Activated CD8-positive, alpha-beta T cell treated with anti-CD3 and anti-CD28 coated beads, Interleukin-2, amount 10 ng/mL, durations not matched to agents 7 days and 5 days (primary cell): ENCODE measurements at regions of chr17 and their contacts with region 1.

Region 1: GRCh38 chr17:74659898-74660297 is 36.4 kb upstream of the CD300E start:
- DNase-seq: no peak
- ATAC-seq: no peak
- H3K4me3 Mint-ChIP-seq: no peak overlapping the region
- H3K27ac Mint-ChIP-seq: no peak overlapping the region
- H3K4me1 Mint-ChIP-seq: peaks cover 5% of the 10 kb centered on the region
- H3K27me3 Mint-ChIP-seq: peaks cover 56% of the 10 kb centered on the region

Region 2: GRCh38 chr17:74671031-74671771 is 11.3 kb after region 1 on chr17:
- CTCF ChIA-PET with region 1: interaction called, 40 read pairs
- POLR2A ChIA-PET with region 1: interaction called, 3 read pairs
- DNase-seq: peak; percentile 86
- ATAC-seq: peak; percentile 99
- H3K4me3 Mint-ChIP-seq: no peak overlapping the region
- H3K27ac Mint-ChIP-seq: no peak overlapping the region
- H3K4me1 Mint-ChIP-seq: no peaks in the 10 kb centered on the region
- H3K27me3 Mint-ChIP-seq: peaks cover 56% of the 10 kb centered on the region

Region 3: DNA sequence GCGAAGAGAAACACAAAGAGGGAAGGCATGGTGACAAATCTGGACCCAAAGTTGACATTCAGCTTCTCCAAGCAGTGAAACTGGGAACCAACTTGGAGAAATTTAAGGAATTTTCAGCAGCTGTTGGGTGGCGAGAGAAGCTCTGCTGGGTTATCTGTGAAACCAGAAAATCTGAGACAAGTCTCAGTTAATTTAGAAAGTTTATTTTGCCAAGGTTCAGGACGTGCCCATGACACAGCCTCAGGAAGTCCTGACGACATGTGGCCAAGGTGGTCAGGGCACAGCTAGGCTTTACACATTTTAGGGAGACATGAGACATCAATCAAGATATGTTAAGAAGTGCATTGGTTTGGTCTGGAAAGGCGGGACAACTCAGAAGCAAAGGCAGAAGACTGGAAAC is 64.0 kb after region 1 on chr17:
- CTCF ChIA-PET with region 1: interaction called, 12 read pairs
- POLR2A ChIA-PET with region 1: no interaction called
- DNase-seq: no peak
- ATAC-seq: no peak
- H3K4me3 Mint-ChIP-seq: no peak overlapping the region
- H3K27ac Mint-ChIP-seq: no peak overlapping the region
- H3K4me1 Mint-ChIP-seq: peaks cover 9% of the 10 kb centered on the region
- H3K27me3 Mint-ChIP-seq: peaks cover 32% of the 10 kb centered on the region

Region 4: DNA sequence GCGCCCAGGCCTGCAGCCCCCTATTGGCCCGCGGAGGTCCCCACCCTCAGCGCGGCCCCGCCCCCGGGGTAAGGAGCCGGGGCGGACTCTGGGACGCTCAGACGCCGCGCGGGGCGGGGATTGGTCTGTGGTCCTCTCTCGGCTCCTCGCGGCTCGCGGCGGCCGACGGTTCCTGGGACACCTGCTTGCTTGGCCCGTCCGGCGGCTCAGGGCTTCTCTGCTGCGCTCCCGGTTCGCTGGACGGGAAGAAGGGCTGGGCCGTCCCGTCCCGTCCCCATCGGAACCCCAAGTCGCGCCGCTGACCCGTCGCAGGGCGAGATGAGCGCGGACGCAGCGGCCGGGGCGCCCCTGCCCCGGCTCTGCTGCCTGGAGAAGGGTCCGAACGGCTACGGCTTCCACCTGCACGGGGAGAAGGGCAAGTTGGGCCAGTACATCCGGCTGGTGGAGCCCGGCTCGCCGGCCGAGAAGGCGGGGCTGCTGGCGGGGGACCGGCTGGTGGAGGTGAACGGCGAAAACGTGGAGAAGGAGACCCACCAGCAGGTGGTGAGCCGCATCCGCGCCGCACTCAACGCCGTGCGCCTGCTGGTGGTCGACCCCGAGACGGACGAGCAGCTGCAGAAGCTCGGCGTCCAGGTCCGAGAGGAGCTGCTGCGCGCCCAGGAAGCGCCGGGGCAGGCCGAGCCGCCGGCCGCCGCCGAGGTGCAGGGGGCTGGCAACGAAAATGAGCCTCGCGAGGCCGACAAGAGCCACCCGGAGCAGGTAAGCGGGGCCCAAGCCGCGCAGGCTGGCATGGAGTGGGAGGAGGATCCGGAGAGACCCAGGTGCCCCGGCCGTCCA is 88.8 kb after region 1 on chr17 and contains the start of gene NHERF1:
- CTCF ChIA-PET with region 1: interaction called, 41 read pairs
- POLR2A ChIA-PET with region 1: no interaction called
- DNase-seq: peak; percentile 95
- ATAC-seq: peak; percentile 90
- H3K4me3 Mint-ChIP-seq: peak within 1 kb of the TSS; percentile 99
- H3K27ac Mint-ChIP-seq: peak within 1 kb of the TSS; percentile 90
- H3K4me1 Mint-ChIP-seq: peaks cover 55% of the 10 kb centered on the region
- H3K27me3 Mint-ChIP-seq: no peaks in the 10 kb centered on the region
- total RNA-seq, gene NHERF1: 286 to 296 TPM

Region 5: DNA sequence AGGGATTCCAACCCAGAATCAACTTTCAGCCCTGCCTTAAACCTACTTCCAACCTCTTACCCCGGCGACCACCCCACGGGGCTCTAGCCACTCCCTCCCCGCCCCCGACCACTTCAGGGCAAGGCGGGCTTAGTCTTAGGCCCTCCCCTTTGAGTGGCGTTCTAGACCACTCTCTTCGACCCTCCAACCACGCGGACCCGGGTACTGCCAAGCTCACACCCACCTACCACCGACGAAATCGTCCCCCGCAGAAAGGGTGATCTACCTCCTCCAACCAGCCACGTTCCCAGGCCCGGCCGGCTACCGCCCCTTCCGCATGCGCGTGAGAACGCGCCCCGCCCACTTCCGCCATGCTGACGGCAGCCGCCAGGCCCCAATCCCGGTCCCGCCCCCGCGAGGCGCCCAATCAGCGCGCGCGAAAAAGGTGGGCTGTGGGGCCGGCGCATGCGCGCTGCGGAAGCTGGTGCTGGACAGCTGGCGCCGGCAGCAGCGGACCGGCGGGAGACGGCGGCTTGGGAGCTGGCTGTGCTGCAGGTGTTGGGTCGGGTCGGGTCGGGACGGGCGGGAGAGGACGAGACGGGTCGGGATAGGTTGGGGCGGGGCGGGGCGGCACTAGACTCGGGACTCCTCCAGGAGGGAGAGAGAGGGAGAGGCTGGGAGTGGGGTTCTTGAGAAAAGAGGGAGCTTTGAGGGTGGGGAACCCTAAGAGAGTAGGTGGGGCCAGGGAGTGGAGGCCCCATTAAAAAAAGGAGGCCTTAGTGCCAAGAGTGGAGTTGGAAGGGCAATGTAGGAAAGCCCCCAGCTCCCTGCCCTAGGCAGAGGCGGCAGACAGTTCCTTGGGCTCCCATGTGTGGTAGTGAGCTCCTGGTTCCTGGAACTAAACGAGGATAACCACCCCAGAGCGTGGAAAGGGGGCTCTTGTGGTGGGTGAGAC is 116.4 kb after region 1 on chr17 and contains the start of gene NAT9:
- CTCF ChIA-PET with region 1: interaction called, 34 read pairs
- POLR2A ChIA-PET with region 1: interaction called, 3 read pairs
- DNase-seq: peak; percentile 99
- ATAC-seq: peak; percentile 83
- H3K4me3 Mint-ChIP-seq: peak within 1 kb of the TSS; percentile 97
- H3K27ac Mint-ChIP-seq: peak within 1 kb of the TSS; percentile 89
- H3K4me1 Mint-ChIP-seq: peaks cover 70% of the 10 kb centered on the region
- H3K27me3 Mint-ChIP-seq: no peaks in the 10 kb centered on the region
- total RNA-seq, gene NAT9: 28.3 to 30.7 TPM

Region 6: GRCh38 chr17:74864866-74865395 is 205.0 kb after region 1 on chr17:
- CTCF ChIA-PET with region 1: interaction called, 20 read pairs
- POLR2A ChIA-PET with region 1: interaction called, 3 read pairs
- DNase-seq: peak; percentile 80
- ATAC-seq: peak; percentile 60
- H3K4me3 Mint-ChIP-seq: no peak overlapping the region
- H3K27ac Mint-ChIP-seq: no peak overlapping the region
- H3K4me1 Mint-ChIP-seq: peaks cover 23% of the 10 kb centered on the region
- H3K27me3 Mint-ChIP-seq: peaks cover 18% of the 10 kb centered on the region